Activated CD8-positive, alpha-beta T cell treated with anti-CD3 and anti-CD28 coated beads for 36 hours (primary cell): ENCODE measurements at regions of chr6 and their contacts with region 1.

Region 1: GRCh38 chr6:159979136-159979874 is 10.4 kb downstream of the IGF2R start:
- DNase-seq: peak; percentile 92
- ATAC-seq: peak; percentile 82
- H3K4me3 Mint-ChIP-seq: peak overlapping the region; percentile 78
- H3K27ac Mint-ChIP-seq: peak overlapping the region; percentile 98
- H3K4me1 Mint-ChIP-seq: peaks cover 95% of the 10 kb centered on the region
- H3K27me3 Mint-ChIP-seq: no peaks in the 10 kb centered on the region
- CTCF ChIP-seq: no peak

Region 2: DNA sequence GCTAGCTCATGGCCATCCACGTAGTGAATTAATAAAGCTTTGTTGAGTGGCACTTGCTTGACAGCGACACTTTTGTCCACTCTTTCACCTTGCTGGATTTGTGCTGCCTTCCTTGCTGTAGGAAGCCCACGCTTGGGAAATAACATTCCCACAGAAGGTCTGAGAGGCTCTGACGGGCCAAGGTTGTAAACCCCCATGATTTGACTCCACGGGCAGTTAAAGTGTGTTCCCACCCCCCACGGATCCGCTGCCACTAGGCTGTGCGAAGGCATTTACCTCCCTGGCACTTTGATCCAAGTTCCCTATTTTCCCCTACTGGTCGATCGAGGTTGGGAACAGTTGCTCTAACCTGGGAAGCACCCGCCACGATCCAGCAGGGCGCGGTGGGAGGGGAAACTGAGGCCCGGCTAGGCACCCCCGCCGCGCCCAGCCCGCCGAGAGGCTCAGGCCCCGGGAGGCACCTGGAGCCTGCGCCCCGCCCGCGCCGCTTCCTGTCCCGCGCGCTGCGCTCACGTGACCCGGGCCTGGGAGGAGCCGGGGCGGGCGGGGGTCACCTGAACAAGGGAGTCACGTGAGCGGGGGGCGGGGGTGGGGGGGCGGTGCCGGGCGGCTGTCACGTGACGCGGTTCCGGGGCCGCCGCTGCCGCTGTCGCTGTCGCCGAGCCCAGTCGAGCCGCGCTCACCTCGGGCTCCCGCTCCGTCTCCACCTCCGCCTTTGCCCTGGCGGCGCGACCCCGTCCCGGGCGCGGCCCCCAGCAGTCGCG is 10.7 kb before region 1 on chr6 and contains the start of gene IGF2R:
- CTCF ChIA-PET with region 1: interaction called, 6 read pairs
- POLR2A ChIA-PET with region 1: interaction called, 57 read pairs
- intact Hi-C with region 1: no loop called
- DNase-seq: peak; percentile 96
- ATAC-seq: peak; percentile 92
- H3K4me3 Mint-ChIP-seq: peak within 1 kb of the TSS; percentile 93
- H3K27ac Mint-ChIP-seq: peak within 1 kb of the TSS; percentile 93
- H3K4me1 Mint-ChIP-seq: peaks cover 35% of the 10 kb centered on the region
- H3K27me3 Mint-ChIP-seq: no peaks in the 10 kb centered on the region
- CTCF ChIP-seq: no peak
- total RNA-seq, gene IGF2R: 81.7 to 82.4 TPM

Region 3: DNA sequence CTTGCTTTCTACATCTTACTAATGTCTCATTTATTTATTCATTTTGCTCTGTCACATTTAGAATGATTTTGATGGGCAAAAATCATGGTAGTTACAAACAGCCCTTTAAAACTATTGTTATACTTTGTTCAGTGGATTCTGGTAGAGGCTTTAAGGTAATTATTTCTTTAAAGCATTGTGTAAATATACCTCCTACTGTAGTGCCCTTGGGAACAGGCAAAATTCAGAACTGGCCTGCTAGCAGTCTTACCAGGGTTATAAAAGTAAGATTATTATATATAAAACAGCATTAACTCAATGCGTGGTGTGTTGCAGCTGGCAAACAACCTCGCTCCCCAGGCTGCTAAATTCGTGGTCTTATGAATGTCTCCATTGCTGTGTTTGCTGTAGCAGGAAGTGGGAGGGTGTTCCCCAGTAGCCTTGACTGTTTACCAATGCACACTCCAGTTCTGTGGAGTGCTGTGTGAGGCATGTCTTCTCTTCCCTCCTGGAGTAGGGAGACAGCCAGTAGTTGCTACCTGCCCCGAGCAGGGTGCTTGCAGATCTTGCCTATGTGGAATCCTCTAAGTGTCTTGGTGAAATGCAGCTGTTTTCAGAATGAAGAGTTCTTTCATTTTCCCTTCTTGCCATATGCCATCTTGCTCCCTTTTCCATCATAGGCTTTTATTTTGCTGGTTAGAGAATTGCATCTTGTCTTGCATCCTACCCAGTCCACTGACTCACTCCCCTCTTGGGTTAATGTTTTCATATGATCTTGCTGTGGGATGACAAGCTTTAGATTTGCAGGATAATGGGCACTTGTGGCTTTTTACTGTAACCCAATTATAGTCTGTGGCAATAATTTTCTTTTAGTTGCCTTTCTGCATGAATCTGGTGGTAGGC is 34.9 kb after region 1 on chr6:
- CTCF ChIA-PET with region 1: interaction called, 5 read pairs
- POLR2A ChIA-PET with region 1: interaction called, 18 read pairs
- intact Hi-C with region 1: loop called (anchors 5 kb)
- DNase-seq: peak; percentile 31
- ATAC-seq: no peak
- H3K4me3 Mint-ChIP-seq: peak overlapping the region; percentile 22
- H3K27ac Mint-ChIP-seq: peak overlapping the region; percentile 84
- H3K4me1 Mint-ChIP-seq: peaks cover 68% of the 10 kb centered on the region
- H3K27me3 Mint-ChIP-seq: no peaks in the 10 kb centered on the region
- CTCF ChIP-seq: no peak